ENCODE measurements at regions of chr1 and their contacts with region 1.

Region 1: GRCh38 chr1:16440470-16441281 is at the start of gene NECAP2:
- DNase-seq: peak; percentile 85 to 91
- ATAC-seq: peak; percentile 97 to 98
- H3K4me3 ChIP-seq: peak within 1 kb of the TSS; percentile 97
- H3K27ac ChIP-seq: peak within 1 kb of the TSS; percentile 84 to 98
- H3K4me1 ChIP-seq: peaks cover 8% of the 10 kb centered on the region; the same call in 1 of the 3 replicates
- CTCF ChIP-seq: peak; percentile 70
- EP300 ChIP-seq: no peak
- POLR2A ChIP-seq: peak; percentile 91
- RAD21 ChIP-seq: peak; percentile 39 to 60
- polyA plus RNA-seq, gene NECAP2: 38.5 and 40.3 TPM in 2 replicates

Region 2: DNA sequence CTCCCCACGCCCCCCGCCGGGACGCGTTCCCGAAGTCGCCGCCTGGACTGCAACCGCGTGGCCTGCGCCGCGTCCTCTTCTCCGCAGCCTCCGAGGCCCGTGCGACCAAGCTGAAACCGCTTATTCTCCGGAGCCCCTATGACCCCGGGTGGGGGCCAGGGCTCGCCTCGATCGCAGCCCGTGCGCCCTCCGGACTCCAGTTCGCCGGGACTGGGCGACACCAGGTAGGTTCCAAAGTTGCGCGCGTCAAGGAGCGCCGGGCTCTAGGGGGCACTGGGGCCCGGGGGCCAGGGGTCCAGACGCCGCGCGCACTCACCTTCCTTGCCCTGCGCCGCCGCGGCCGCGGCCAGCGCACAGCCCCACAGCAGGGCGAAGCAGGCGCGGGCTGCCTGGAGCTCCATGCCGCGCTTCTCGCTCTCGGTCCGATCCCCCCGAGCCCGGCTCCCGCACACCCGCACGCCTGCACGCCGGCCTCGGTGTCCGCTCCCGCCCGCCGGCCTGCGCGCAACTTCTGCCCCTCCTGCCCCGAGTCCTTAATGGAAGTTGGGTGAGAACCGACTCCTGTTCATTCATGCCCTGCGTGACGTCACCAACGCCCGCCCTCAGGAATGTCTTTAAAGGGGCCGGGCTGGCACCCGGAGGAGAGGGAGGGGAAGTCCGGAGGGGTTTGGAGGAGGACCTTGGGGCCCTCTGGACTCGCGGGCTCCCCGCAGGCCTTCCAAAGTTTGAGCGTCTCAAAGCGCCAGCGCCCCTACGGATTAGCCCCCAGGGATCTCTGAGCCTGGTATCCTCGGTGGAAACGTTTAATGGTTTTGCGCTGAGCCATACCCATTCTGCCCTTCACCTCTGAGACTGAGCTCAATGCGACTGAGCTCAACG is 284.9 kb before region 1 on chr1 and contains the start of gene EPHA2:
- CTCF ChIA-PET with region 1: no interaction called
- POLR2A ChIA-PET with region 1: no interaction called
- DNase-seq: peak; percentile 79 to 91
- ATAC-seq: peak; percentile 76 to 84
- H3K4me3 ChIP-seq: peak within 1 kb of the TSS; percentile 93
- H3K27ac ChIP-seq: peak within 1 kb of the TSS; percentile 97 to 100
- H3K4me1 ChIP-seq: peaks cover 44% of the 10 kb centered on the region
- CTCF ChIP-seq: no peak
- EP300 ChIP-seq: no peak
- POLR2A ChIP-seq: peak; percentile 93
- RAD21 ChIP-seq: peak in 1 of 2 experiments; percentile 16; a peak in 1 of 5 replicates
- polyA plus RNA-seq, gene EPHA2: 55.0 and 59.3 TPM in 2 replicates

Region 3: GRCh38 chr1:16366722-16367257 is 73.9 kb before region 1 on chr1 and contains the start of gene SZRD1:
- CTCF ChIA-PET with region 1: interaction called, 10 read pairs
- POLR2A ChIA-PET with region 1: interaction called, 3 read pairs
- DNase-seq: peak; percentile 78 to 99
- ATAC-seq: peak; percentile 88 to 91
- H3K4me3 ChIP-seq: peak within 1 kb of the TSS; percentile 71
- H3K27ac ChIP-seq: peak within 1 kb of the TSS; percentile 96 to 97
- H3K4me1 ChIP-seq: peaks cover 35% of the 10 kb centered on the region
- CTCF ChIP-seq: no peak
- EP300 ChIP-seq: no peak
- POLR2A ChIP-seq: no peak
- RAD21 ChIP-seq: no peak
- polyA plus RNA-seq, gene SZRD1: 56.8 and 62.9 TPM in 2 replicates

Region 4: DNA sequence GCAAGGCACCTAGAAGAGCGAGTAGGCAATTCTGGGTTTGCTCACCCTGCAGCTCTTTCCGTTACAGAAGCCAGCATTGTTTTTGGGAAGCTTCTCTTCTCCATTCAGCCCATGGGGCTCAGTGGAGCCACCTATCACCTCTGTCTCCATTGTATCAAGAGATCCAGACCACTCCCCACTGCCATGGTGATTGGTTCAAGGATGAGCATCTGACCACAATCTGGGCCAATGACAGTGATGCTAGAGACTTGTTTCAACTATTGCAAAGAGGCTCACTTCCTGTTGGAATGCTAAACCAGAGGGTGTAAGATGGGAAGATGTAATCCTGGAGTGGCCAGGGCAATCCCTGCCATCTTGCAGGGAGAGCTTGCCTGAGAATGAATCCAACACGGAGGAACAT is 10.1 kb before region 1 on chr1:
- CTCF ChIA-PET with region 1: interaction called, 14 read pairs
- POLR2A ChIA-PET with region 1: no interaction called
- DNase-seq: peak; percentile 22 to 56
- ATAC-seq: peak in 1 of 2 experiments; percentile 89; a peak in 4 of 6 replicates
- H3K4me3 ChIP-seq: no peak overlapping the region
- H3K27ac ChIP-seq: no peak overlapping the region
- H3K4me1 ChIP-seq: 0 out of 3 replicates have a peak, but pooled peaks cover under 1% of the 10 kb centered on the region
- CTCF ChIP-seq: no peak
- EP300 ChIP-seq: no peak
- POLR2A ChIP-seq: no peak
- RAD21 ChIP-seq: no peak

Region 5: DNA sequence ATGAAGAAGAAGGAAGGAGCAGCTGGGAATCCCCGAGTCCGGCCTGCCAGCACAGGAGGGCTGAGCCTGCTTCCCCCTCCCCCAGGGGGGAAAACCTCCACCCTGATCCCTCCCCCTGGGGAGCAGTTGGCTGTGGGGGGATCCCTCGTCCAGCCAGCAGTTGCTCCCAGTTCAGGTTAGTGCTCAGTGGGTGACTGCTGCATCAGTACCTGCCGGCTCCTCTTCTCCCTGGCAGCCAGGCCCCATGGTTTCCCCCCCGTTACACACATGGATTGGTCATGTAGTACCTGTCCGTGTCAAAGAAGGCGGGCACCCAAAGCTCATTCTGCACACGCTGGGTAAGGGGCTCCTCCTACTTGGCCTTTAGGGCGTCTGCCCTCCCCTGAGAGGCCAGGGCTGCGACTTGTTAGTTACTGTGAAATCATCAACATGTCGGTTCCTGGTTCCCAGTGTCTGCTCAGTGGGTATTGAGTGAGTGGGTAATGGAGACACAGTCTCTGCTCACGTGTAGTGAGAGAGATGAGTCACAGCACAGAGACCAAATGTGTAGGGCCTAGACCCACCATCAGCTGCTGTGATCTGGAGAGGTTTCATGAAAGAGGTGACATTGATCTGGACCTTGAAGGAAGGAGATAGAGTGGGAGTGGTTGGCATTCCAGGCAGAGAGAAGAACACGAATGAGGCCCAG is 11.3 kb after region 1 on chr1:
- CTCF ChIA-PET with region 1: interaction called, 30 read pairs
- POLR2A ChIA-PET with region 1: no interaction called
- DNase-seq: no peak
- ATAC-seq: no peak
- H3K4me3 ChIP-seq: no peak overlapping the region
- H3K27ac ChIP-seq: no peak overlapping the region
- H3K4me1 ChIP-seq: peaks cover 2% of the 10 kb centered on the region; the same call in 2 of the 3 replicates
- CTCF ChIP-seq: no peak
- EP300 ChIP-seq: no peak
- POLR2A ChIP-seq: no peak
- RAD21 ChIP-seq: no peak

Measured in A549 (cell line).